Heart left ventricle (tissue), 16 donors: ENCODE measurements at regions of chr3 and their contacts with region 1.

Region 1: DNA sequence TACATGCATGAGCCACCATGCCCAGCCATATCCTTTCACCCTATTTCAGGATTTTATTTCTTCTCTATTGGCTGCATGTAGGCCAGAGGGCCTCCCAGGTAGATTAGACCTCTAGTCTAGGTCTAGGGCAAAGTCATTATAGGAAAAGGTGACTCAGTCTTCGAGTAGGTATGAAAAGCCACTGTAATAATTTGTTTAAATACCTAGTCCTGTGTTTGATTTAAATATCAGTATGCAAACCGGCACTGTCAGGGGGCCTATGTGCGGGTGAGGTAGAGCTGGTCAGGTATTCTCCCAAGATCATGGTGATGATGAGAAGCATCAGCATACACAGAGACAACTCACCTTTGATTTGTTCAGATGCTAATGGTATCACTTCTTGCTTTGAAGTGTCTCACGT is 101.4 kb upstream of the UMPS start:
- DNase-seq: no peak
- ATAC-seq: no peak
- H3K4me3 ChIP-seq: no peak overlapping the region
- H3K27ac ChIP-seq: no peak overlapping the region
- H3K4me1 ChIP-seq: peaks cover 0 to 19% (median 7%) of the 10 kb centered on the region in 12 donors
- H3K27me3 ChIP-seq: no peaks in the 10 kb centered on the region
- CTCF ChIP-seq: no peak
- POLR2A ChIP-seq: no peak

Region 2: DNA sequence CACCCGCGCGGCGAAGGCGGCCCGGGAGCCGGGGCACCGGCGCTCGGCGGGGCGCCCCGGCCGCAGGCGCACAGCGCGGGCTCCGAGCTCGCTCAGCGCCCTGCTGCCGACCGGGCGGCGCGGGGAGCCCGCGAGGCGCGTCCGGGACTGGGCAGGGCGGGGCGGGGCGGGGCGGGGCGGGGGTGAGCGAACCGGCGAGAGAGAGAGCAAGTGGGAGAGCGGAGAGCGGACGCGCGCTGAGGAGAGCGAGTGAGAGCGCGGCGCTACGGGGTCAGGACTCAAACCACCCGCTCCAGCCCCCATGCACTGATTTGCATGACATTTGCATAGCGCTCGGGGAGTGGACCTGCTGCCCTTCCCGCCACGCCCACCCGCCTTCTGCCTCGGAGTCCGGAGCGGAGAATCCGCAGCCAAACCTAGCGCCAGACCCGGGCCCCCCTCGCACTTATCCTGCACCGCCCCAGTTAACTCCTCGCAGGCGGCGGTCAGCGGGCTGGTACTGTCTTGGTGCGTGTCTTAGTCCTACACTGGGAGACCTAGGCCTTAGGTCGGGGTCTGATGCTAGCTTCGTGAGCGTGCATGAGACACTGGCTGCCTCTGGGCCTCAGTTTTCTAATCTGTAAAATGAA is 744.5 kb before region 1 on chr3 and contains the start of gene MYLK:
- intact Hi-C with region 1: no loop called
- DNase-seq: peak; percentile 70 to 87 (median 80)
- ATAC-seq: peak; percentile 87 to 95 (median 94)
- H3K4me3 ChIP-seq: peak within 1 kb of the TSS in 11 of 12 donors; percentile 25 to 64 (median 49)
- H3K27ac ChIP-seq: peak within 1 kb of the TSS in 1 of 12 donors; percentile 21
- H3K4me1 ChIP-seq: peaks cover 0 to 13% (median 5%) of the 10 kb centered on the region in 12 donors
- H3K27me3 ChIP-seq: peaks cover 0 to 35% (median 0%) of the 10 kb centered on the region in 9 donors
- CTCF ChIP-seq: no peak
- POLR2A ChIP-seq: no peak
- total RNA-seq, gene MYLK: 10.5 to 20.7 (median 12.7) TPM

Region 3: GRCh38 chr3:124565013-124565412 is 63.9 kb before region 1 on chr3:
- intact Hi-C with region 1: no loop called
- DNase-seq: peak in 4 of 5 donors; percentile 66 to 79 (median 74)
- ATAC-seq: peak; percentile 42 to 64 (median 61)
- H3K4me3 ChIP-seq: no peak overlapping the region
- H3K27ac ChIP-seq: peak overlapping the region in 1 of 12 donors; percentile 41
- H3K4me1 ChIP-seq: peaks cover 0 to 21% (median 10%) of the 10 kb centered on the region in 12 donors
- H3K27me3 ChIP-seq: no peaks in the 10 kb centered on the region
- CTCF ChIP-seq: peak; percentile 87 to 98 (median 90)
- POLR2A ChIP-seq: no peak

Region 4: GRCh38 chr3:124584552-124585391 is 44.1 kb before region 1 on chr3:
- intact Hi-C with region 1: loop called in 2 of 10 experiments (anchors 1 kb)
- DNase-seq: peak; percentile 80 to 89 (median 84)
- ATAC-seq: peak; percentile 80 to 96 (median 93)
- H3K4me3 ChIP-seq: peak overlapping the region; percentile 33 to 81 (median 64)
- H3K27ac ChIP-seq: peak overlapping the region; percentile 0 to 94 (median 84)
- H3K4me1 ChIP-seq: peaks cover 0 to 37% (median 18%) of the 10 kb centered on the region in 12 donors
- H3K27me3 ChIP-seq: peaks cover 0 to 16% (median 0%) of the 10 kb centered on the region in 9 donors
- CTCF ChIP-seq: no peak
- POLR2A ChIP-seq: peak; percentile 54 to 88

Region 5: GRCh38 chr3:124653797-124654469 is 25.1 kb after region 1 on chr3:
- intact Hi-C with region 1: no loop called
- DNase-seq: peak in 2 of 5 donors; percentile 23 to 30
- ATAC-seq: peak; percentile 89 to 96 (median 92)
- H3K4me3 ChIP-seq: no peak overlapping the region
- H3K27ac ChIP-seq: peak overlapping the region; percentile 25 to 90 (median 78)
- H3K4me1 ChIP-seq: peaks cover 0 to 34% (median 10%) of the 10 kb centered on the region in 12 donors
- H3K27me3 ChIP-seq: no peaks in the 10 kb centered on the region
- CTCF ChIP-seq: no peak
- POLR2A ChIP-seq: no peak

Region 6: GRCh38 chr3:124700880-124701684 is 72.2 kb after region 1 on chr3:
- intact Hi-C with region 1: loop called in 1 of 10 experiments (anchors 2 kb)
- DNase-seq: no peak
- ATAC-seq: peak in 2 of 4 donors; percentile 14
- H3K4me3 ChIP-seq: no peak overlapping the region
- H3K27ac ChIP-seq: peak overlapping the region in 1 of 12 donors; percentile 23
- H3K4me1 ChIP-seq: peaks cover 0 to 17% (median 0%) of the 10 kb centered on the region in 12 donors
- H3K27me3 ChIP-seq: no peaks in the 10 kb centered on the region
- CTCF ChIP-seq: no peak
- POLR2A ChIP-seq: no peak

Region 7: GRCh38 chr3:124826703-124827102 is 197.8 kb after region 1 on chr3:
- intact Hi-C with region 1: no loop called
- DNase-seq: no peak
- ATAC-seq: no peak
- H3K4me3 ChIP-seq: no peak overlapping the region
- H3K27ac ChIP-seq: peak overlapping the region in 4 of 12 donors; percentile 0 to 69 (median 18)
- H3K4me1 ChIP-seq: peaks cover 0 to 48% (median 24%) of the 10 kb centered on the region in 12 donors
- H3K27me3 ChIP-seq: no peaks in the 10 kb centered on the region
- CTCF ChIP-seq: no peak
- POLR2A ChIP-seq: no peak